ENCODE measurements at regions of chr11 and their contacts with region 1.

Region 1: GRCh38 chr11:11841723-11842420 is at the start of gene USP47:
- DNase-seq: peak; percentile 93 to 96
- ATAC-seq: peak; percentile 85 to 90 (median 88)
- H3K4me3 ChIP-seq: peak within 1 kb of the TSS; percentile 89
- H3K27ac ChIP-seq: peak within 1 kb of the TSS; percentile 99
- H3K4me1 ChIP-seq: peaks cover 33% of the 10 kb centered on the region
- H3K27me3 ChIP-seq: no peaks in the 10 kb centered on the region
- CTCF ChIP-seq: peak; percentile 57
- total RNA-seq, gene USP47: 73.1 to 108 (median 90.6) TPM

Region 2: DNA sequence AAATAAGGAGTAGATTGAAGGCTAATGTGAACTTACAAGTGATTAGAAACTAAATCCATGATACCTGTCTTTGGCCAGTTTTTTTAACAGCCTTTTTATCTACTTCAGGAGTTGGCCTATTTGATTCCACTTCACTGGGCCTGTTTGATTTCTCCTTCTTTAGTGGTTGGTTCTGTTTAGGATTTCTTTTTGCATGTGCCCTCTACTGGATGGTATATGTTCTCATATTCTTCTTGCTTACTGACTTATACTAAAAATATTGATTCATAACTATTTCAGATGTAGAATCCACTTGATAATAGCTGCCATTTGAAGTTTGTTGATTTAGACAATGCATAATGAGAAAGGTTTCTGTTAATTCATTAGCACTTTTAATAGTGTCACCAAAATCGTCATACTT is 53.8 kb after region 1 on chr11:
- intact Hi-C with region 1: loop called in 1 of 2 experiments (anchors 10 kb)
- DNase-seq: no peak
- ATAC-seq: no peak
- H3K4me3 ChIP-seq: no peak overlapping the region
- H3K27ac ChIP-seq: no peak overlapping the region
- H3K4me1 ChIP-seq: no peaks in the 10 kb centered on the region
- H3K27me3 ChIP-seq: no peaks in the 10 kb centered on the region
- CTCF ChIP-seq: no peak

Measured in psoas muscle (tissue), 8 donors.